Posterior vena cava (tissue), 2 donors: ENCODE measurements at regions of chr17 and their contacts with region 1.

Region 1: GRCh38 chr17:56939901-56940343 is 20.9 kb downstream of the COIL start:
- DNase-seq: no peak

Region 2: GRCh38 chr17:56819431-56820145 is 120.3 kb before region 1 on chr17:
- intact Hi-C with region 1: loop called in 1 of 2 experiments (anchors 10 kb)
- DNase-seq: no peak

Region 3: DNA sequence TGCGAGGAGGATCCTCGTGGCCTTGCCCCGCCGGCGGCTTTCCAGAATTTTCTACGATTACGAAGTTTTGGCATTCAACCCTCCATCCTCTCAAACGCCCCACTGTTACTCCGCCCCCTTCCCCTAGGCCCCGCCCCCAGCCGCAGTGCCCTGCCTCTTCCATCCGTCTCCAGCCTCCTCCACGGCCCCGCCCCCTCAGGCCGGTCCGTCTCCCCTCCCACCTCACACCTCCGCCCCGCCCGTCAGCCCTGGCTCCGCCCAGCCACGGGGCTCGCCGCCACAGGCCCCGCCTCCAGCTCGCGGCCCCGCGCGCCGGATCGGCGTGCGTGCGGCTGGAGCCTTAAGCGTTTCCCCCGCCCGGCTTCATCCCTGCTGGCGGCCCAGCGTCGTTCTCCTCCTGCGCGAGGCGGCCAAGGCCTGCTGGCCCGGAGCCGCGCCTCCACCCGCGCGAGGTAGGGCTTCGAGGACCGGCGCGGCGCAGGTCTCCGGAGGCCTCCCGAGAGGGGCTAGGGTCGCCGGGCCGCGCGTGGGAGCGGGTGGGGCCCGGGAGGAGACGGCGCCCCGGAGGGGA is 106.0 kb before region 1 on chr17 and contains the starts of genes C17orf67 and DGKE:
- intact Hi-C with region 1: loop called (anchors 5 to 10 kb)
- DNase-seq: peak; percentile 99
- total RNA-seq, gene C17orf67: 2.1 to 2.7 TPM
- total RNA-seq, gene DGKE: 7.6 to 9.8 TPM